Heart left ventricle (tissue), 16 donors: ENCODE measurements at regions of chr1 and their contacts with region 1.

Region 1: GRCh38 chr1:156591432-156592157 is at the start of gene NAXE:
- DNase-seq: peak; percentile 78 to 89 (median 80)
- ATAC-seq: peak; percentile 80 to 97 (median 94)
- H3K4me3 ChIP-seq: peak within 1 kb of the TSS; percentile 75 to 97 (median 89)
- H3K27ac ChIP-seq: peak within 1 kb of the TSS; percentile 76 to 94 (median 86)
- H3K4me1 ChIP-seq: peaks cover 0 to 17% (median 12%) of the 10 kb centered on the region in 12 donors
- H3K27me3 ChIP-seq: no peaks in the 10 kb centered on the region
- CTCF ChIP-seq: no peak
- POLR2A ChIP-seq: peak in 1 of 2 donors; percentile 66
- total RNA-seq, gene NAXE: 87.4 to 141 (median 111) TPM

Region 2: DNA sequence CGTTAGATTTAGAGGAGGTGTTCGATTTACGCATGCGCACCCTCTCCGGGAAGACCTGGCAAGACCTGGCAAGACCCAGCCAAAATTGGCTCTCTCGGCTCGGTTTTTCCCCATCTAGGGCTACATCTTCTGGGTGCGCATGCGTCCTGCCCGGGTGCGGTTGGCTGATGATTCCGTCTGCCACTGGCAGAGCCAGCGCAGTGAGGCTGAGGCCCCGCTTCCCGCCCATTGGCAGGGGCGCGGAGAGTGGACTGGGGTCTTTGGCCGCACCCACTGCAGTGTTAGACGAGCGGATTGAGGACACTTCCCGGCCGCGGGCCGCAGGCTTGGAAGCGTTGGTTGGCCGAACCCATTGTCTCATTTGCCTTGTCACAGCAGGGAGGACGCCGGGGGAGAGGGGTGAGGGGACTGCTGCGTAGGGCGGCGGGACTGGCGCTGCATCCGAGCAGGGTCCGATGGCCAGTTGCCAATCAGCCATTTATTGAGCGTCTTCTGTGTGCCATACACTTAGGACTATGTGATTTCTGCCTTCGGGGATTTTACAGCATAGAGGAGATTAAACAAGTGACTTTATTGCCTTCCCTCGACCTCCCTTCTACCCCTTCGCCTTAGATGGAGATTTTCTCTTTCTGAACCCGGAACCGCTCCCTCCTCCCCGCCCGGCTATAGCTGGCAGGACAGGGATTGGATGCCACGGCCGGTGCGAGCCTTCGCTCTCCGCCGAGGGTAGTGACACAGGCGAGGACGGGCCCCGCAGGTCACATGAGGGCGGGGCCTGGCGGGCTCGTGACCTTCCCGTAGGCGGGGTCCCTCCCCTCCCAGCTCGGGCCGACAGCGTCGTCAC is 134.8 kb before region 1 on chr1:
- intact Hi-C with region 1: loop called in 2 of 10 experiments (anchors 5 kb)
- DNase-seq: peak; percentile 97 to 99 (median 98)
- ATAC-seq: peak; percentile 94 to 96 (median 95)
- H3K4me3 ChIP-seq: peak overlapping the region; percentile 42 to 73 (median 62)
- H3K27ac ChIP-seq: peak overlapping the region; percentile 98 to 100 (median 98)
- H3K4me1 ChIP-seq: peaks cover 0 to 30% (median 6%) of the 10 kb centered on the region in 12 donors
- H3K27me3 ChIP-seq: no peaks in the 10 kb centered on the region
- CTCF ChIP-seq: no peak
- POLR2A ChIP-seq: peak; percentile 35 to 71

Region 3: GRCh38 chr1:156465747-156466365 is 125.7 kb before region 1 on chr1:
- intact Hi-C with region 1: loop called in 2 of 10 experiments (anchors 5 kb)
- DNase-seq: no peak
- ATAC-seq: peak in 3 of 4 donors; percentile 5 to 16 (median 12)
- H3K4me3 ChIP-seq: no peak overlapping the region
- H3K27ac ChIP-seq: peak overlapping the region; percentile 13 to 89 (median 60)
- H3K4me1 ChIP-seq: peaks cover 14 to 79% (median 51%) of the 10 kb centered on the region in 12 donors
- H3K27me3 ChIP-seq: no peaks in the 10 kb centered on the region
- CTCF ChIP-seq: peak in 2 of 12 donors; percentile 11 to 12
- POLR2A ChIP-seq: no peak